BJ (cell line): ENCODE measurements at regions of chr19 and their contacts with region 1.

Region 1: DNA sequence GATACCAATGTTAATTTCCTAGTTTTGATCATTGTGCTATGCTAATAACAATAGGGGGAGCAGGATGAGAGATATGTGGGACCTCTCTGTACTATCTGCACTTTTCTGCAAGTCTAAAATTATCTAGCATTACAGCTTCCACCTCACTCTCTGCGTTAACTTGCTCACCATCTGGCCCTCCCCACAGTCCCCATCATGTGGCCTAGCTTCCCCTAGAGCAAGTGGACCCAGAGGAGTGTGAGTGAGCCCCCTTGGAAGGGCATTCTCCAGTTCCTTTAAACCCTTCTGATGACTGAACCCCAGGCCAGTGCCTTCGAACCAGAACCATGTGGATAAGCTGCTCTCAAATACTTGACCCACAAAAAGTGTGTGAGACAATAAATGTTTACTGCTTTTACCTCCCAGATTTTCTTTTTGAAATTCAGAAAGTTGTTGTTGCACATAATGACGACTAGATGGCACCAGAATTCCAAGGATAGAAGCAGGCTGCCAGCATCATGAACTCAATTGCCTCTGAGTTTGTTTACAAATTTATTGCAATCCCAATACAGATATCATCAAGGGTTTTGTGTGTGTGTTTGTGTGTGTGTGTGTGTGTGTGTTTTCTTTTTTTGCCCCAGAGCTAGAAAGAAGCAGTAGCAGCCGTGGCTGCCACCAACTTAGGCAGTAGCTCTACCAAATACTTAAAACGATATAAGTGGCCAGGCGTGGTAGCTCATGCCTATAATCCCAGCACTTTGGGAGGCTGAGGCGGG is 49.0 kb upstream of the ZNF780A start:
- DNase-seq: peak; percentile 2
- H3K4me3 ChIP-seq: no peak overlapping the region
- H3K27me3 ChIP-seq: peaks cover 4% of the 10 kb centered on the region; the same call in 1 of the 2 replicates
- CTCF ChIP-seq: peak; percentile 68

Region 2: DNA sequence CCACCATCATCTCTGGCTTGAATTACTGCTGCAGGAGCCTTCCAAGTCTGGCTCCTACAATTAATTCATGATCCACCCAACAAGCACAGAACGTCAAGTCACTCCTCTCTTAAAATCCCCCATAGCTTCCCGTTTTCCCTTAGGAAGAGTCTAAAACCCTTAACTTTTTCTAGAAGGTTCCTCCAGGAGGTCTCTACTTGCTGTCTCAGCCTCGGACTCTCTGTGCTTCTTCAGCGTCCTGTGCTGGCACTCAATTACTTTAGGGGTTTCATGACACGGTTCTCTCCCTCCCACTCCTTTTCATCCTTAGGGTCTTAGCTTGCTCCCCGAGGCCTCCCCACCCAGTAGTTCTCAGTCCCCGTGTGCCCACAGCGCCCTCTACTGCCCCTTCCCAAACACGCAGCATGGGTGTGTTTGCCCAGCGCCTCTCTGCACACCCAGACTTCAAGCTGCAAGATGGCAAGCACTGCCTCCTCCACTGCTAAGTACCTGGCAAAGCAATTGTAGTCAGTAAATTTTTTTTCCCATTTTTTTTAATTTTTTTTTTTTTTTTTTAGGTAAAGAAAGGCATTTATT is 25.7 kb after region 1 on chr19:
- CTCF ChIA-PET with region 1: interaction called, 10 read pairs
- POLR2A ChIA-PET with region 1: no interaction called
- DNase-seq: no peak
- H3K4me3 ChIP-seq: no peak overlapping the region
- H3K27me3 ChIP-seq: peaks cover 2% of the 10 kb centered on the region
- CTCF ChIP-seq: peak; percentile 73

Region 3: GRCh38 chr19:40217027-40217810 is 77.5 kb after region 1 on chr19:
- CTCF ChIA-PET with region 1: interaction called, 27 read pairs
- POLR2A ChIA-PET with region 1: no interaction called
- DNase-seq: no peak
- H3K4me3 ChIP-seq: no peak overlapping the region
- H3K27me3 ChIP-seq: peaks cover 14% of the 10 kb centered on the region
- CTCF ChIP-seq: peak; percentile 34

Region 4: DNA sequence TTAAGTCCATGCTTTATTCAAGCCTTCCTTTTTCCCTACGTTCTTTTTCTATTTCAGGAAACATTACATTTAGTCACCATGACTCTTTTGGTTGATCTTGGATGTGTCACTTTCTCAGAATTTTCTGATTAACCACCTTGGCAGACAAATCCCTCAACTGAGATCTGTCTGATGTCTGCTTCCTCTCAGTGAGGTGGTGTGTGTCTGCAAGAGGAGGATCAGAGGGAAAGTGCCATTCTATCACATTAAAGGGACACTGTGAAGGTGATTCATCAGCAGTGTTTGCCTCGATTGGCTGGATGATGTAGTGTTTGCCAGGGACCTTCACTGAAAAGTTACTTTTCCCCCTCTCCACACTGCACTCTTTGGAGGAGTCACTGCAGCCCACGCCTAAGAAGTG is 89.8 kb after region 1 on chr19:
- CTCF ChIA-PET with region 1: interaction called, 10 read pairs
- POLR2A ChIA-PET with region 1: no interaction called
- DNase-seq: no peak
- H3K4me3 ChIP-seq: no peak overlapping the region
- H3K27me3 ChIP-seq: no peaks in the 10 kb centered on the region
- CTCF ChIP-seq: no peak